ENCODE measurements at regions of chr3 and their contacts with region 1.

Region 1: GRCh38 chr3:10738688-10739372 is 77.2 kb upstream of the SLC6A11 start:
- DNase-seq: peak; percentile 81
- H3K4me3 Mint-ChIP-seq: no peak overlapping the region
- H3K27ac Mint-ChIP-seq: no peak overlapping the region
- H3K4me1 Mint-ChIP-seq: peaks cover 8% of the 10 kb centered on the region
- H3K27me3 Mint-ChIP-seq: peaks cover 31% of the 10 kb centered on the region

Region 2: DNA sequence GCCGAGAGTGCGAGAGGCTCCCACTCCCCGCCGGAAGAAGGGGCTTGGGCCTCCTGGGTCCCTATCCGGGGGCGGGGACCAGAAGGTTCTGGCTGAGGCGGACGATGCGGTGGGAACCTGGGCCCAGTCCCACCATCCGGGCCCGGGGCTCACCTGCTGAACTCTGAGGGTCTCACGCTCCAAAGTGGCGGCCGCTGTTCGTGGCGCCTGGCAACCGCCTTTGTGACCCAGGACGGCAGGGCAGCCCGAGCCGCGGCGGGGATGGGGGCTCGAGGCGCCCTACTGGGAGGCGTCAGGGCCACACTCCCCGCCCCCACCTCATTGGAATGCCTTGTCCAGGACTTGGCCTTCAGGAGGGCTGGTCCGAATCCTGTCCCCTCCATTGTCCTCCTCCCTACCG is 630.7 kb before region 1 on chr3 and contains the start of gene FANCD2OS:
- CTCF ChIA-PET with region 1: no interaction called
- intact Hi-C with region 1: no loop called
- DNase-seq: no peak
- H3K4me3 Mint-ChIP-seq: no peak within 1 kb of the TSS
- H3K27ac Mint-ChIP-seq: no peak within 1 kb of the TSS
- H3K4me1 Mint-ChIP-seq: no peaks in the 10 kb centered on the region
- H3K27me3 Mint-ChIP-seq: no peaks in the 10 kb centered on the region
- total RNA-seq, gene FANCD2OS: not detected

Region 3: GRCh38 chr3:10337323-10338163 is 401.3 kb before region 1 on chr3:
- CTCF ChIA-PET with region 1: interaction called, 17 read pairs
- intact Hi-C with region 1: no loop called
- DNase-seq: no peak
- H3K4me3 Mint-ChIP-seq: no peak overlapping the region
- H3K27ac Mint-ChIP-seq: no peak overlapping the region
- H3K4me1 Mint-ChIP-seq: no peaks in the 10 kb centered on the region
- H3K27me3 Mint-ChIP-seq: no peaks in the 10 kb centered on the region

Region 4: GRCh38 chr3:10344147-10344943 is 394.5 kb before region 1 on chr3:
- CTCF ChIA-PET with region 1: interaction called, 17 read pairs
- intact Hi-C with region 1: loop called (anchors 1 kb)
- DNase-seq: peak; percentile 74
- H3K4me3 Mint-ChIP-seq: no peak overlapping the region
- H3K27ac Mint-ChIP-seq: no peak overlapping the region
- H3K4me1 Mint-ChIP-seq: no peaks in the 10 kb centered on the region
- H3K27me3 Mint-ChIP-seq: no peaks in the 10 kb centered on the region

Region 5: DNA sequence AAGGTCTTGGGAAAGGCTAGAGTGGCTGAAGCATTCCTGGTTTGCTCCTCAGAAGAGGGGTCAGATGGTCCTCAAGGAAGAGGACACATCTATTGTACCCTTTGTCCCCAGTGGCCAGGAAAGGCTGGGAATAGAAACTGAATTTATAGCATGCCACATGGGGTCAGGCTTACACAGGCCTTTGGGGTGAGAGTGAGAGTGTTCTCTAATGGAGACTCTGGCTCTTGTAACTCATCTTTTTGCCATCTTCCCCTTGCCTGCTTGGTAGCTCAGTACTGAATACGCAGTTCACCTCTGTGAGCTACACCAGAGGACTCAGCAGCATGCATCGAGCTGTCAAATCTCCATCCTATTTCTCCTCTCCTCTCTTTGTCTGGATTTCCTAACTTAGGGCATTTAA is 321.0 kb before region 1 on chr3:
- CTCF ChIA-PET with region 1: interaction called, 9 read pairs
- intact Hi-C with region 1: loop called (anchors 1 kb)
- DNase-seq: peak; percentile 44
- H3K4me3 Mint-ChIP-seq: no peak overlapping the region
- H3K27ac Mint-ChIP-seq: no peak overlapping the region
- H3K4me1 Mint-ChIP-seq: peaks cover 8% of the 10 kb centered on the region
- H3K27me3 Mint-ChIP-seq: peaks cover 6% of the 10 kb centered on the region

Region 6: GRCh38 chr3:11077466-11077865 is 338.6 kb after region 1 on chr3:
- CTCF ChIA-PET with region 1: no interaction called
- intact Hi-C with region 1: no loop called
- DNase-seq: no peak
- H3K4me3 Mint-ChIP-seq: no peak overlapping the region
- H3K27ac Mint-ChIP-seq: no peak overlapping the region
- H3K4me1 Mint-ChIP-seq: no peaks in the 10 kb centered on the region
- H3K27me3 Mint-ChIP-seq: peaks cover 19% of the 10 kb centered on the region

Region 7: DNA sequence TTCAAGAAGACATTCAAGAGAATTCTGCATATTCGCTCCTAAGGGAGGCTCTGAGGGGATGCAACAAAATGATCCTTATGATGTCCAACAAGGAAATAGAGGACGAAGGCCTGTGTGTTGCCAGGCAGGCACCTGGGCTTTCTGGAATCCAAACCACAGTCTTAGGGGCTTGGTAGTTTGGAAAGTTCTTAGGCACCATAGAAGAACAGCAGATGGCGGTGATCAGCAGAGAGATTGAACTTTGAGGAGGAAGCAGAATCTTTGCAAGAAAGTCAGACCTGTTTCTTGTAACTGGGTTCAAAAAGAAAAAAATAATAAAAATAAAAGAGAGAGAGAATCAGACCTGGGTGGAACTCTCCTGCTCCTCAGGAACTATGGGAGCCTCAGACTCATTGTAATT is 521.6 kb after region 1 on chr3:
- CTCF ChIA-PET with region 1: no interaction called
- intact Hi-C with region 1: no loop called
- DNase-seq: no peak
- H3K4me3 Mint-ChIP-seq: no peak overlapping the region
- H3K27ac Mint-ChIP-seq: no peak overlapping the region
- H3K4me1 Mint-ChIP-seq: no peaks in the 10 kb centered on the region
- H3K27me3 Mint-ChIP-seq: no peaks in the 10 kb centered on the region

Region 8: GRCh38 chr3:11582191-11582968 is 843.5 kb after region 1 on chr3:
- CTCF ChIA-PET with region 1: no interaction called
- intact Hi-C with region 1: no loop called
- DNase-seq: peak; percentile 51
- H3K4me3 Mint-ChIP-seq: peak overlapping the region; percentile 56
- H3K27ac Mint-ChIP-seq: no peak overlapping the region
- H3K4me1 Mint-ChIP-seq: peaks cover 52% of the 10 kb centered on the region
- H3K27me3 Mint-ChIP-seq: no peaks in the 10 kb centered on the region